Esophagus muscularis mucosa (tissue), 4 donors: ENCODE measurements at regions of chr3 and their contacts with region 1.

Region 1: GRCh38 chr3:134299185-134299887 is 48.7 kb upstream of the RYK start:
- DNase-seq: no peak
- H3K4me3 ChIP-seq: no peak overlapping the region
- H3K27ac ChIP-seq: no peak overlapping the region
- H3K4me1 ChIP-seq: peaks cover 4 to 15% (median 9%) of the 10 kb centered on the region in 4 donors
- H3K27me3 ChIP-seq: no peaks in the 10 kb centered on the region
- CTCF ChIP-seq: peak; percentile 45 to 54 (median 53)
- EP300 ChIP-seq: no peak
- POLR2A ChIP-seq: no peak

Region 2: GRCh38 chr3:134212906-134213665 is 86.2 kb before region 1 on chr3:
- intact Hi-C with region 1: loop called (anchors 1 kb)
- DNase-seq: peak; percentile 96
- H3K4me3 ChIP-seq: no peak overlapping the region
- H3K27ac ChIP-seq: no peak overlapping the region
- H3K4me1 ChIP-seq: peaks cover 3 to 38% (median 26%) of the 10 kb centered on the region in 4 donors
- H3K27me3 ChIP-seq: no peaks in the 10 kb centered on the region
- CTCF ChIP-seq: peak; percentile 87 to 98 (median 96)
- EP300 ChIP-seq: no peak
- POLR2A ChIP-seq: no peak

Region 3: DNA sequence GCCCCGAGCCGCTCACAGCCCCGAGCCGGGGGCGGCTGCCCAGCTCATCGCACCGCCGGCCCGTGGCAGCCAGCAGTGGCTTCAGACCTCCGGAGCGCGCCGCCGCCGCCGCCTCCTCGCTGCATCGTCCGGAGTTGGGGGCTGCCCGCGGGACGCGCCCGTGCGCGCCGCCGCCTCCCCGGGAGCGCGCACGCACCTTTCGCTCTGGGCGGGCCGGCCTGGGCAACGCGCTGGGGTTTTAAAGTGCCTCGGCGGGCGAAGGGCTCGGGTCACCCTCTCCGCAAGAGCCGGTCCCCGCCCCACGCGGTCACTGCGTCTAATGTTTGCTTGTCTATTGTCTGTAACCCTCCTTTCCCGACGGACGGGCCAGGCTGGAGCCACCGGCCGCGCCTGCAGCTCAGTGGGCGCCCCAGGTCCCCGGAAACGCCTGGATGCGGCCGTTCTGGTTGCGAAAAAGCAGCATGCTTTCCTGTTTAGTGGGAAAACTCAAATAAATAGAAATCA is 48.6 kb before region 1 on chr3 and contains the start of gene RYK:
- intact Hi-C with region 1: loop called (anchors 5 kb)
- DNase-seq: peak; percentile 94
- H3K4me3 ChIP-seq: peak within 1 kb of the TSS; percentile 78 to 94 (median 84)
- H3K27ac ChIP-seq: peak within 1 kb of the TSS; percentile 89 to 93 (median 93)
- H3K4me1 ChIP-seq: peaks cover 41 to 52% (median 47%) of the 10 kb centered on the region in 4 donors
- H3K27me3 ChIP-seq: no peaks in the 10 kb centered on the region
- CTCF ChIP-seq: no peak
- EP300 ChIP-seq: no peak
- POLR2A ChIP-seq: no peak
- total RNA-seq, gene RYK: 78.2 to 120 (median 96.5) TPM

Region 4: DNA sequence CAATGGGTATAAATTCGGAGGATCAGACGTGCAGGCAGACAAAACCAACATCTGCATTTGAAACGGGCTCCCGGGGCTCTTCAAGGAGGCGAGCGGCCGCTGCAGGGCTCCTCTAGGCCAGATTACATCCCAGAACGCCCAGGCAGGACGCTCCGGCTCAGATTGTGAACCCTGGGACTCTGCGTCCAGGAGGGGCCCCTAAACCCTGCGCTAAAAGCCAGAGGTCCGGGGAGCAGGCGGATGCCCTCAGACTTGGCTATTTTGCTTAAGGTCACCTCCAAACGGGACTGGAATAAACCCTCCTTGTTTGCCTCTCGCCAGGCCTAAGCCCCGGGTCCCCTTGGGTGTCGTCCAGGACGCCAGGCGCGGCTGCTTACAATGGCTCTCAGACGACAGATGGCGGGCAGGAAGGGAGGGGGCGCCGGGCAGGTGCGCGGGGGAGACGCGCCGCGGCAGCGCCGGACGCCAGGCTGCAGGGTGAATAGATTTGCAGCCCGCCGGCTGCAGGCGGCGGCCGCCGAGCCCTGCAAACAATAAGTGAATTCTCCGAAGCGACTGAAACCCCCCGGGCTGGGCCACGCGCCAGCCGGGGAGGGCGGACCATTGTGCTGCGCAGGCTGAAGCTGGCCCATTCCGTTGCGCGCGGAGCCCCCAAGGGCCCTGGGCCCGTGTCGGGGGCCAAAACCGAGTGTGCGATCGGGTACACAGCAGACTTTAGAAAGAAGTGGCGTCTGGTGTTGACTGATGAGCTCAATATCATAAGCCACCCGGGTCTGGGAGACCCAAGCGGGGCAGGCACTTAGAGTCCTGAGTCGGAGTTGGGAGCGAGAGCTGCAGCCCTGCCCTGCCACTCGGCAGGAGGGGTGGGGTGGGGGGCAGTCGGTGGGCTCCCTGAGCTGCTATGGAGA is 107.2 kb after region 1 on chr3:
- intact Hi-C with region 1: no loop called
- DNase-seq: no peak
- H3K4me3 ChIP-seq: peak overlapping the region; percentile 49 to 58 (median 51)
- H3K27ac ChIP-seq: peak overlapping the region in 2 of 4 donors; percentile 10 to 23
- H3K4me1 ChIP-seq: peaks cover 9 to 21% (median 14%) of the 10 kb centered on the region in 4 donors
- H3K27me3 ChIP-seq: peaks cover 0 to 28% (median 0%) of the 10 kb centered on the region in 4 donors
- CTCF ChIP-seq: no peak
- EP300 ChIP-seq: no peak
- POLR2A ChIP-seq: no peak

Region 5: GRCh38 chr3:135106445-135106844 is 807.1 kb after region 1 on chr3:
- intact Hi-C with region 1: no loop called
- DNase-seq: no peak
- H3K4me3 ChIP-seq: no peak overlapping the region
- H3K27ac ChIP-seq: no peak overlapping the region
- H3K4me1 ChIP-seq: no peaks in the 10 kb centered on the region
- H3K27me3 ChIP-seq: no peaks in the 10 kb centered on the region
- CTCF ChIP-seq: no peak
- EP300 ChIP-seq: no peak
- POLR2A ChIP-seq: no peak